WTC11 (cell line): ENCODE measurements at regions of chr12 and their contacts with region 1.

Region 1: GRCh38 chr12:1795785-1796514 is 24.4 kb upstream of the LRTM2 start:
- DNase-seq: peak; percentile 86
- ATAC-seq: peak; percentile 72
- H3K4me3 Mint-ChIP-seq: peak overlapping the region; percentile 66
- H3K27ac Mint-ChIP-seq: no peak overlapping the region
- H3K4me1 Mint-ChIP-seq: peaks cover 35% of the 10 kb centered on the region
- H3K27me3 Mint-ChIP-seq: no peaks in the 10 kb centered on the region; the same call in 1 of the 2 replicates
- CTCF ChIP-seq: peak; percentile 96

Region 2: GRCh38 chr12:1634590-1635191 is 161.3 kb before region 1 on chr12:
- CTCF ChIA-PET with region 1: interaction called, 69 read pairs
- POLR2A ChIA-PET with region 1: no interaction called
- DNase-seq: peak; percentile 83
- ATAC-seq: peak; percentile 74
- H3K4me3 Mint-ChIP-seq: no peak overlapping the region
- H3K27ac Mint-ChIP-seq: no peak overlapping the region
- H3K4me1 Mint-ChIP-seq: peaks cover 34% of the 10 kb centered on the region
- H3K27me3 Mint-ChIP-seq: peaks cover 48% of the 10 kb centered on the region
- CTCF ChIP-seq: peak; percentile 41; the same call in 1 of the 2 replicates

Region 3: GRCh38 chr12:1661553-1662335 is 134.2 kb before region 1 on chr12:
- CTCF ChIA-PET with region 1: interaction called, 52 read pairs
- POLR2A ChIA-PET with region 1: interaction called, 3 read pairs
- DNase-seq: peak; percentile 71
- ATAC-seq: peak; percentile 35
- H3K4me3 Mint-ChIP-seq: peak overlapping the region; percentile 73
- H3K27ac Mint-ChIP-seq: no peak overlapping the region
- H3K4me1 Mint-ChIP-seq: peaks cover 15% of the 10 kb centered on the region
- H3K27me3 Mint-ChIP-seq: peaks cover 49% of the 10 kb centered on the region
- CTCF ChIP-seq: no peak

Region 4: GRCh38 chr12:1690578-1691122 is 105.3 kb before region 1 on chr12 and contains the start of gene ADIPOR2:
- CTCF ChIA-PET with region 1: interaction called, 27 read pairs
- POLR2A ChIA-PET with region 1: interaction called, 8 read pairs
- DNase-seq: peak; percentile 94
- ATAC-seq: peak; percentile 98
- H3K4me3 Mint-ChIP-seq: peak within 1 kb of the TSS; percentile 99
- H3K27ac Mint-ChIP-seq: peak within 1 kb of the TSS; percentile 100
- H3K4me1 Mint-ChIP-seq: peaks cover 16% of the 10 kb centered on the region
- H3K27me3 Mint-ChIP-seq: no peaks in the 10 kb centered on the region; the same call in 1 of the 2 replicates
- CTCF ChIP-seq: no peak
- total RNA-seq, gene ADIPOR2: 36.0 to 39.2 TPM (median 38.4 TPM) in 3 replicates

Region 5: GRCh38 chr12:1716215-1716862 is 79.6 kb before region 1 on chr12:
- CTCF ChIA-PET with region 1: interaction called, 24 read pairs
- POLR2A ChIA-PET with region 1: no interaction called
- DNase-seq: no peak
- ATAC-seq: no peak
- H3K4me3 Mint-ChIP-seq: no peak overlapping the region
- H3K27ac Mint-ChIP-seq: no peak overlapping the region
- H3K4me1 Mint-ChIP-seq: peaks cover 5% of the 10 kb centered on the region
- H3K27me3 Mint-ChIP-seq: no peaks in the 10 kb centered on the region; the same call in 1 of the 2 replicates
- CTCF ChIP-seq: no peak

Region 6: DNA sequence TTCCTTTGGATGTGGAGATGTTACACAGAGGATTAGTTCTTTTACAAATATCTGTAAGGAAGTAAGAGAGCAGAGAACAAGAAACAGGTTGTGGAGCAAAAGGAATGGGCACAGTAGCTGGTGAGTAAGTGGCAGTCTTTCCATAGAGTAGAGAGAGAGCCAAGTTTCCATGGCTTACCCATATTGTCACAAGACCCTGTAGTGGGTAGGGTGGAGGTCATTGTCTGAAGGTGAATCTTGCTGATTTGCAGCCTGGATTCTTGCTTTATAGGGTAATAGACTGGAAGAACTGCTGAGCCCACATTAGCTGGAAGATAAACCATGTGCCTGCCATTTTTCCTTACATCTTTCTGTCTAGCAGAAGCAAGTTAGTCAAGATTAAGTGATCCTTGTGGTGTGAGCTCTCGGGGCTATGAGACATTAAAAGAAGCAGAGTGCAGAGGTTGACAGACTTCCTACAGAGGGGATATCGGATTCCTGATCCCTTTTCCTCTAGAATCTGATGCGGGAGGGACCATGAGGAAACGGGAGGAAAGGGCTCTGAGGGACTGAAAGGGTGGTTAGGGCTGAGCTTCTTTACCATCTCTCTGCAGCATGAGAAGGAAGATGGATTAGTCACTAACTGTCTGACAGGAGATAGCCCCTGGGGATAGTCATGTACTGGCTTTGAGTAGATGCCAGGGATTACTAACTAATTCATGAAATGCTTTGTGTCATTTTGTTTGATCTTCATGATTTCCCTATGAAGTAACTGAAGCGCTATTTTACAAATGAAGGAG is 19.6 kb before region 1 on chr12:
- CTCF ChIA-PET with region 1: interaction called, 13 read pairs
- POLR2A ChIA-PET with region 1: no interaction called
- DNase-seq: no peak
- ATAC-seq: peak; percentile 26; the same call in 1 of the 2 replicates
- H3K4me3 Mint-ChIP-seq: no peak overlapping the region
- H3K27ac Mint-ChIP-seq: peak overlapping the region; percentile 7
- H3K4me1 Mint-ChIP-seq: peaks cover 20% of the 10 kb centered on the region
- H3K27me3 Mint-ChIP-seq: no peaks in the 10 kb centered on the region
- CTCF ChIP-seq: no peak

Region 7: GRCh38 chr12:1872001-1872400 is 76.1 kb after region 1 on chr12:
- CTCF ChIA-PET with region 1: no interaction called
- POLR2A ChIA-PET with region 1: no interaction called
- DNase-seq: no peak
- ATAC-seq: no peak
- H3K4me3 Mint-ChIP-seq: no peak overlapping the region
- H3K27ac Mint-ChIP-seq: no peak overlapping the region
- H3K4me1 Mint-ChIP-seq: no peaks in the 10 kb centered on the region
- H3K27me3 Mint-ChIP-seq: no peaks in the 10 kb centered on the region; the same call in none of the 2 replicates
- CTCF ChIP-seq: no peak

Region 8: GRCh38 chr12:1896964-1897363 is 101.0 kb after region 1 on chr12:
- CTCF ChIA-PET with region 1: no interaction called
- POLR2A ChIA-PET with region 1: no interaction called
- DNase-seq: no peak
- ATAC-seq: no peak
- H3K4me3 Mint-ChIP-seq: no peak overlapping the region
- H3K27ac Mint-ChIP-seq: no peak overlapping the region
- H3K4me1 Mint-ChIP-seq: no peaks in the 10 kb centered on the region
- H3K27me3 Mint-ChIP-seq: no peaks in the 10 kb centered on the region
- CTCF ChIP-seq: no peak

Region 9: GRCh38 chr12:1939801-1940607 is 144.1 kb after region 1 on chr12:
- CTCF ChIA-PET with region 1: interaction called, 119 read pairs
- POLR2A ChIA-PET with region 1: interaction called, 4 read pairs
- DNase-seq: peak; percentile 89
- ATAC-seq: peak; percentile 91
- H3K4me3 Mint-ChIP-seq: no peak overlapping the region; the same call in 1 of the 2 replicates
- H3K27ac Mint-ChIP-seq: no peak overlapping the region
- H3K4me1 Mint-ChIP-seq: peaks cover 4% of the 10 kb centered on the region
- H3K27me3 Mint-ChIP-seq: no peaks in the 10 kb centered on the region
- CTCF ChIP-seq: peak; percentile 93